Testis (tissue), 5 donors: ENCODE measurements at regions of chr3 and their contacts with region 1.

Region 1: GRCh38 chr3:151135541-151136337 is 50.3 kb downstream of the MED12L start:
- DNase-seq: no peak
- H3K4me3 ChIP-seq: no peak overlapping the region
- H3K27ac ChIP-seq: no peak overlapping the region
- H3K4me1 ChIP-seq: no peaks in the 10 kb centered on the region
- H3K27me3 ChIP-seq: no peaks in the 10 kb centered on the region
- CTCF ChIP-seq: no peak
- POLR2A ChIP-seq: no peak

Region 2: DNA sequence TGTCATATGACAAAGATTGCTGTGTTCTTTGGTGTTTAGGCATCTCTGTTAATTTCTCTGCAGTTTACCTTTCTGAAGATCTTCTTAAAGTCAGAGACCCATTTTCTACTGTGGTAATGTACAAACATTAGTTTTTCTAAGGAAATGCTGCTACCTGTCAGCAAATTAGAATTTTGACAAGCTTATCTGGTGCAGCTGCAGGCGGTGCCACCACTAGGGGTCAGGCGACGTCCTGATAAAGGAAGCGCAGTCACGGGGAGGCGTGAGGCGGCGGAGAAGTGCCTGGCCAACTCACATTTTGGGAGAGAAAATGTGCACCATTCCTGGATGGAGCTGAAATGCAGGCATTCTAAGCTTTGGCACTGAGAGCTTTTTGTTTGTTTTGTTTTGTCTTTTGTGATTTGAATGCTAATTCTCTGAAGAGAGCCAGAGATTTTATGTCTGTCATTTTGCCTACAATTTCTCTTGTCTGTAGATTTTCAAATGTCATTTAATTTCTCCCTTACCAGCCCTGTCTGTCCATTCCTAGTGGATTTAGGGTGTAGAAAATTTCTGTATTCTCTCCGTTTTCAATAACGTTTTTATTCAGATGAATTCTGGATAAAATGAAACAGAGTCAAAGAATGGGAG is 347.9 kb before region 1 on chr3:
- intact Hi-C with region 1: loop called (anchors 10 kb)
- DNase-seq: peak; percentile 93
- H3K4me3 ChIP-seq: no peak overlapping the region
- H3K27ac ChIP-seq: no peak overlapping the region
- H3K4me1 ChIP-seq: peaks cover 6% of the 10 kb centered on the region
- H3K27me3 ChIP-seq: no peaks in the 10 kb centered on the region
- CTCF ChIP-seq: peak; percentile 87 to 89 (median 88)
- POLR2A ChIP-seq: no peak